HepG2 (cell line): ENCODE measurements at regions of chr10 and their contacts with region 1.

Region 1: DNA sequence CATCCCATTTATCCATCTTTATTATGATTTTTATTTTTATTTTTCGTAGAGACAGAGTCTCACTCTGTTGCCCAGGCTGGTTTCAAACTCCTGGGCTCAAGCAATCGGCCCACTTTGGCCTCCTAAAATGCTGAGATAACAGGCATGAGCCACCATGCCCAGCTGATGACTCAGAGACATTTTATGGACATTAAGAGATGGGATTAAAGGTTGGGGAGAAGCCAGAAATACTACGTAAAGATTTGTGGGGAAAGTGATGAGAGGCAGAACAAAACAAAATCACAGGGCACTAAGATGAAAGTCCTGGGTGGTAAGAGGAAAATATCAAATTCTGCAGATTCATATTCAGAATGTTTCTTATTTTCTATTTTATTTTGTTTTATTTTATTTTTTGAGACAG is 7.6 kb downstream of the WNT8B start:
- DNase-seq: no peak
- ATAC-seq: no peak
- H3K4me3 ChIP-seq: no peak overlapping the region
- H3K27ac ChIP-seq: no peak overlapping the region
- H3K4me1 ChIP-seq: no peaks in the 10 kb centered on the region
- H3K27me3 ChIP-seq: peaks cover 0 to 14% of the 10 kb centered on the region in 2 experiments; a peak in 2 of 5 replicates
- CTCF ChIP-seq: no peak
- EP300 ChIP-seq: no peak
- POLR2A ChIP-seq: no peak
- RAD21 ChIP-seq: no peak

Region 2: DNA sequence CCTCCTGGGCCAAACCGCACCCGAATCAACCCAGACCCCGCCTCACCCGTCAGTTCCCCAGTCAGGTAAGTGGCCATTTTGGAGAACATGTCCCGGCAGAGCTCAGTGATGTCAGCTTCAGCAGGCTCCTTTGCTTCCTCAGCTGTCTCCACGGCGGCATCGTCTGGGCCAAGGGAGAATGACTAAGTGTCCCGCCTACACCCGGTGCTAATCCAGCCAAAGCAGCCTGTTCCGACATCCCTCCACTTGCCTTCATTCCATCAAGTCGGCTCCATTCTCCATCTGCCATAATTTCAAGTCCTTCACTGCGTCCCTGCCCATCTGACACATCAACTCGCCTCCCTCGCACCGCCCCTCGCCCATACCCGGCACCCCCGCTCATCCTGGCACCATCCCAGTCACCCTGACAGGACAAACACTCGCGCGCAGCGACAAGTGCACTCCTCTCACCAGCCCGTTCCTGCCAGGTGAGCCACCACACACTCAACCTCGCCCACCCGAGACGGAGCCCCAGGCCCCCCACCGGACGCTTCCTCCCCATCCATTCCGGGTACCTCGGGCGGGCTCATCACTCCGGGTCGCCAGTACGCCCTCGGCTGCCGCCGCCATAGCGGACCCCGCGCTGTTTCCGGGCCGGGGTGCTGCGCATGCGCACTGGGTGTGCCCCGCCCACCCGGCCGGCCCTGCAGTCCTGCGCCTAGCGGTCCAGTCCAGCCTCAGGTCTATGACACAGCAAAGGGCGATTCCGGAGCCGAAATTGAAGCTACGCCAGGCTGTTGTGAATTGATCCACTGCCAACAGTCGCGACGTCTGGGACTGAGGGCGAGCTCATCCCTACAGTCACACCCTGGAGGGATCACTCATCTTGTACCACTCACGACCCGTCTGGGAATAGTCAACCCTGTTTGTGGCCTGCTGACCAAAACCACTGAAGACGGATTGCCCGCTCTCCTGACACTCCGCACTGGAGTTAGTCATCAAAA is 184.0 kb before region 1 on chr10 and contains the start of gene BLOC1S2:
- CTCF ChIA-PET with region 1: no interaction called
- POLR2A ChIA-PET with region 1: no interaction called
- in situ Hi-C with region 1: no loop called
- intact Hi-C with region 1: no loop called
- DNase-seq: peak; percentile 74
- ATAC-seq: peak; percentile 94
- H3K4me3 ChIP-seq: peak within 1 kb of the TSS; percentile 79 to 94 (median 85)
- H3K27ac ChIP-seq: peak within 1 kb of the TSS; percentile 67
- H3K4me1 ChIP-seq: peaks cover 57% of the 10 kb centered on the region
- H3K27me3 ChIP-seq: no peaks in the 10 kb centered on the region; a peak in 1 of 5 replicates
- CTCF ChIP-seq: peak; percentile 14; the same call in 1 of the 2 replicates
- EP300 ChIP-seq: peak in 1 of 2 experiments; percentile 10; a peak in 1 of 4 replicates
- POLR2A ChIP-seq: peak; percentile 52 to 95; a peak in 3 of 4 replicates
- RAD21 ChIP-seq: no peak
- total RNA-seq, gene BLOC1S2: 64.4 and 81.4 TPM in 2 replicates

Region 3: GRCh38 chr10:100347568-100348195 is 122.7 kb before region 1 on chr10:
- CTCF ChIA-PET with region 1: no interaction called
- POLR2A ChIA-PET with region 1: no interaction called
- in situ Hi-C with region 1: no loop called
- intact Hi-C with region 1: no loop called
- DNase-seq: no peak
- ATAC-seq: no peak
- H3K4me3 ChIP-seq: peak overlapping the region; percentile 95 to 99 (median 95)
- H3K27ac ChIP-seq: peak overlapping the region; percentile 81
- H3K4me1 ChIP-seq: peaks cover 63% of the 10 kb centered on the region
- H3K27me3 ChIP-seq: no peaks in the 10 kb centered on the region; a peak in 1 of 5 replicates
- CTCF ChIP-seq: no peak
- EP300 ChIP-seq: no peak
- POLR2A ChIP-seq: no peak
- RAD21 ChIP-seq: no peak

Region 4: DNA sequence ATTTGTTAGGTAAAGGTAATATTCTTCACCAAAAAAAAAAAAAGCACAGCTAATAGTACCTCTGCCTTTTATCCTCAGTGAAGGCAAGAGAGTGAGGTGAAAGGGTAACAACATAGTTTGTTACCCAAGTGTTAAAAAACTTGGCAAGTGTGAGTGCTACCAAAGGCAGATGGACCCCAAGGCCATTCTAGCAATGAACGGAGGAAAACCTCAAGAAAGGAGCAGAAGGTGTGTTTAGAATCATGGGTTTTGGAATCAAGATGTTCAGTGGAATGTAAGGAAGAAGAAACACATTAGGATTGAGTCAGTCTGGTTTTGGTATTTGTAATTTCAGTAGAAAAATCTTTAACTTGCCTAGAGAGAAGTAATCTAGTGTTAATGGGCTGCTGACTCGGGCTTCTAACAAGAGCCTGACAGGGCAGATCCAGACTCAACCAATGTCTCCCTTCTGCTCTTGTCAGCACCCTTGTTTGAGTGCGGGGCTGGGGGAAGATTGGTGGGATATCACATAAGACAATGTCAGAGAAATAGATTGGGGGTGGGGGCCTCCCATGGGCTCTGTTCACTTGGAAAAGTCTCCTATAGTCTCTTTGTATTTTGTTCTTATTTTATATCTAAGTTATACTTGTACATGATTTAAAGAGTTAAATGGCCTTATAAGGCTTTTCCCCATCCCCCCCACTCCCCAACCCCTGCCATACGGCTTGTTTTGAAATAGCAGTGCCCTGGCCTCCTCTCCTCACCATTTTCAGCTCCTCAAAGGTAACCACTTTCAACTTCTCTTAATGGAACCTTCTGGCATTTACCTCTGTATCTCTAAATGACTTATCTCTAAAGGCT is 79.0 kb before region 1 on chr10:
- CTCF ChIA-PET with region 1: no interaction called
- POLR2A ChIA-PET with region 1: no interaction called
- in situ Hi-C with region 1: no loop called
- intact Hi-C with region 1: loop called (anchors 2 kb)
- DNase-seq: no peak
- ATAC-seq: no peak
- H3K4me3 ChIP-seq: no peak overlapping the region
- H3K27ac ChIP-seq: no peak overlapping the region
- H3K4me1 ChIP-seq: peaks cover 48% of the 10 kb centered on the region
- H3K27me3 ChIP-seq: no peaks in the 10 kb centered on the region
- CTCF ChIP-seq: no peak
- EP300 ChIP-seq: no peak
- POLR2A ChIP-seq: no peak
- RAD21 ChIP-seq: no peak